ENCODE measurements at regions of chr12 and their contacts with region 1.

Region 1: DNA sequence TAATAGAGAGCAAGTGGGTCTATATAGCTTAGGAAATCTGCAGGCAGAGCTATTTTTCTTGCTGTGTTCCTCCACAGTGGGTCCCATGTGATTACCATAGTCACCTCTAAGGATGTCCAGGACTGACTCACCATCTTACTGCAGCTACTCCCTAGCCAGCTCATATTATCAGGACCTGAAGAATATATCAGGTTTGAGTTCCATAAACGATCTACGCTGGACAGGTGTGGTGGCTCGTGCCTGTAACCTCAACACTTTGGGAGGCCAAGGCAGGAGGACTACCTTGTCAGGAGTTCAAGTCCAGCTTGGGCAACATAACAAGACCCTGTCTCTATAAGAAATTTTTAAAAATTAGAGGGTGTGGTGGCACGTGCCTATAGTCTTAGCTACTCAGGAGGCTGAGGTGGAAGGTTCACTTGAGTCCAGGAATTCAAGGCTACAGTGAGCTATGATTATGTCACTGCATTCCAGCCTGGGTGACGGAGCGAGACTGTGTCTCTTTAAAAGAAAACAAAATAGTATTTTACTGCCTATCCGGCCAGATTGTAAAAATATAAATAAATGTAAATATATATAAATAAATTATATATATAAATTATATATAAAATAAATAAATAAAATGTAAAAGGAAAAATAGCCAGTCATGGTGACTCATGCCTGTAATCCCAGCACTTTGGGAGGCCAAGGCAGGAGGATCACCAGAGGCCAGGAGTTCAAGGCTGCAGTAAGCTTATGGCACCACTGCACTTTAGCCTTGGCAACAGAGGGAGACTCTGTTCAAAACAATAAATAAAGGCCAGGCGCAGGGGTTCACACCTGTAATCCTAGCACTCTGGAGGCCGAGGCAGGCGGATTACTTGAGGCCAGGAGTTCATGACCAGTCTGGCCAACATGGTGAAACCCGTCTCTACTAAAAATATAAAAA is 6.9 kb upstream of the SPRYD4 start:
- DNase-seq: no peak
- CTCF ChIP-seq: no peak

Region 2: GRCh38 chr12:56206457-56207166 is 254.9 kb before region 1 on chr12:
- CTCF ChIA-PET with region 1: interaction called, 42 read pairs
- POLR2A ChIA-PET with region 1: no interaction called
- DNase-seq: peak; percentile 48
- CTCF ChIP-seq: peak; percentile 53

Region 3: GRCh38 chr12:56266693-56267442 is 194.6 kb before region 1 on chr12 and contains the start of gene COQ10A:
- CTCF ChIA-PET with region 1: interaction called, 18 read pairs
- POLR2A ChIA-PET with region 1: no interaction called
- DNase-seq: peak; percentile 94
- CTCF ChIP-seq: peak; percentile 43

Region 4: GRCh38 chr12:56315622-56316473 is 145.6 kb before region 1 on chr12 and contains the start of gene CNPY2:
- CTCF ChIA-PET with region 1: interaction called, 25 read pairs
- POLR2A ChIA-PET with region 1: no interaction called
- DNase-seq: peak; percentile 96
- CTCF ChIP-seq: peak; percentile 32

Region 5: GRCh38 chr12:56448860-56449621 is 12.5 kb before region 1 on chr12 and contains the start of gene TIMELESS:
- CTCF ChIA-PET with region 1: interaction called, 34 read pairs
- POLR2A ChIA-PET with region 1: interaction called, 3 read pairs
- DNase-seq: peak; percentile 96
- CTCF ChIP-seq: no peak

Measured in GM10248 (cell line).